Right ventricle myocardium superior (tissue), 1 donor: ENCODE measurements at regions of chr12 and their contacts with region 1.

Region 1: DNA sequence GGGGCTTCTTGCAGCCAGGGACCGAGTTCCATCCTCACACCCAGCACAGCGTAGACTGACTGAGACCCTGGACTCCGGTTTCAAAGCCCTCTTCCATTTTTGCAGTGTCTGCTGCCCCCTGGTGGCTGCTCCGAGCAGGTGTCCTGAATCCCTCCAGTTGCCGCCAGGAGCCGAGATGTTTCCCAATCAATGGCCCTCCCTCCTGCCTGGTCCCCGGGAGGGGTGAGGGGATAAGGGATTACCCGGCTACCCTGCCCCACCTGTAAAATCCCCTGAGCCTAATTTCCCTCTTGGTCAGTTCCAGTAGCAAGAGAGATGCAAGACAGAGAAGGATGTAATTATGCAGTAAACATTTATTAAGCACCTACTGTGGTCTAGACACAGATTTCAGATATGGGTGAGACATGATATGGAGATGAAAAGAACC is 55.0 kb downstream of the PHETA1 start:
- DNase-seq: peak; percentile 81
- ATAC-seq: peak; percentile 83

Region 2: DNA sequence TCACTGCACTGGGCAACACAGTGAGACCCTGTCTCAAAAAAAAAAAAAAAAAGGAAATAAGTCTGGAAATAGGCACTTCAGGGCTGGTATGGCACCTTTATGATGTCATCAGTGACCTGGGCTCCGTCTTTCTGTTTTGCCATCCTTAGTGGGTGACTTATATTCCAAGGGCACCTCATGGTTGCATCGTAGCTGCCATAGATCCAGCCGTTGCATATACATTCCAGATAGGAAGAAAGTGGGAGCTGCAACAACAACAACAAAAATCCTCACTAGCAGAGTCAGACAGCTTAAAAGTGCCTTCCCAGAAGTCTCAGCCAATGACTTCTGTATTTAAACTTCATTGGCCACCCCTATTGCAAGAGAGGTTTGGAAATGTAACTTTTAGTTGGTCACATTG is 419.9 kb before region 1 on chr12:
- intact Hi-C with region 1: loop called (anchors 2 kb)
- DNase-seq: no peak
- ATAC-seq: no peak

Region 3: GRCh38 chr12:110937104-110937641 is 376.7 kb before region 1 on chr12:
- intact Hi-C with region 1: loop called (anchors 5 kb)
- DNase-seq: peak; percentile 77
- ATAC-seq: peak; percentile 73

Region 4: GRCh38 chr12:111024205-111024801 is 289.5 kb before region 1 on chr12:
- intact Hi-C with region 1: loop called (anchors 5 kb)
- DNase-seq: peak; percentile 62
- ATAC-seq: peak; percentile 82